CD4-positive, alpha-beta T cell (primary cell): ENCODE measurements at regions of chr6 and their contacts with region 1.

Region 1: DNA sequence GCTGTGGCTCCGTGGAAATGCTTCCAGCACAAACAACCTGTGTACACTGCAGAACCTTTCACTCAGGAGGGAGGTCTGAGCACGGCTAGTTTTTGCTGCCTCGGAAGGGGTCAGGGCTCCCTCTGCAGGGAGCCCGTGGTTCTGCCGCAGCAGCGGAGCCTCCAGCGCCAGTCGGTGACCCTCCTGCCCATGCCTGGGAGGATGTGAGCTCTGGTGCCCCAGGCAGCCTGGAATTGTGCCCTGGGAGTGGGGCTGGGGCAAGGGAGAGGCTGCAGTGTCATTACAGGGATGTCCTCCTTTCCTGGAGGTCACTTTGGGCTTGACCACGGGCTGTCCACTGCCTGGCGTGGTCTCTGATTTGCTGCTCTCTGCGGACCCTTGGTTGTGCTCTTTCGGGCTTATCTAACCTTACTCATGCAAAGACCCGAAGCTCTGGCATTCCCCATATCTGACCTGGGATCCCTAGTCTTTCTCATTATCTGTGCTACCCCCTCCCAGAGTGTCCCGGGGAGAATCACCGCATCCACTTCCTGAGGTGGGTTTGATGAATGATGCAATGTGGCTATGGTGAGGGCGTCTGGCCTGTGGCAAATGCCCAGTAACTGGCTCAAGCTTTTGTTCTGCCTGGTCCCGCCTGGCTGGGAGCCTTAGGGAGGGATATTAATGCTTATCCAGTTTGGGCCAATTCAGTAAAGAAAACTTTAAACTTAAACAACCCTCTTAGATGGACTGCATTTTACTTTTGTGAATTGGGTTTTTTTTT is 59.6 kb upstream of the TAGAP start:
- DNase-seq: peak; percentile 70 to 91 (median 76)
- ATAC-seq: peak; percentile 62
- H3K4me3 ChIP-seq: no peak overlapping the region
- H3K4me3 Mint-ChIP-seq: peak overlapping the region; percentile 31
- H3K27ac ChIP-seq: peak overlapping the region in 1 of 2 donors; percentile 55
- H3K27ac Mint-ChIP-seq: peak overlapping the region; percentile 38
- H3K4me1 ChIP-seq: peaks cover 80% of the 10 kb centered on the region
- H3K4me1 Mint-ChIP-seq: peaks cover 84% of the 10 kb centered on the region
- H3K27me3 ChIP-seq: no peaks in the 10 kb centered on the region
- H3K27me3 Mint-ChIP-seq: no peaks in the 10 kb centered on the region
- CTCF ChIP-seq: peak; percentile 93

Region 2: GRCh38 chr6:157535339-157536222 is 1568.8 kb before region 1 on chr6:
- CTCF ChIA-PET with region 1: no interaction called
- POLR2A ChIA-PET with region 1: no interaction called
- intact Hi-C with region 1: no loop called
- DNase-seq: peak in 3 of 14 experiments; percentile 50 to 68 (median 52)
- ATAC-seq: peak; percentile 59
- H3K4me3 ChIP-seq: no peak overlapping the region
- H3K4me3 Mint-ChIP-seq: peak overlapping the region; percentile 16
- H3K27ac ChIP-seq: peak overlapping the region in 1 of 2 donors; percentile 48
- H3K27ac Mint-ChIP-seq: peak overlapping the region; percentile 79
- H3K4me1 ChIP-seq: peaks cover 52% of the 10 kb centered on the region
- H3K4me1 Mint-ChIP-seq: peaks cover 34% of the 10 kb centered on the region
- H3K27me3 ChIP-seq: no peaks in the 10 kb centered on the region
- H3K27me3 Mint-ChIP-seq: no peaks in the 10 kb centered on the region
- CTCF ChIP-seq: no peak

Region 3: DNA sequence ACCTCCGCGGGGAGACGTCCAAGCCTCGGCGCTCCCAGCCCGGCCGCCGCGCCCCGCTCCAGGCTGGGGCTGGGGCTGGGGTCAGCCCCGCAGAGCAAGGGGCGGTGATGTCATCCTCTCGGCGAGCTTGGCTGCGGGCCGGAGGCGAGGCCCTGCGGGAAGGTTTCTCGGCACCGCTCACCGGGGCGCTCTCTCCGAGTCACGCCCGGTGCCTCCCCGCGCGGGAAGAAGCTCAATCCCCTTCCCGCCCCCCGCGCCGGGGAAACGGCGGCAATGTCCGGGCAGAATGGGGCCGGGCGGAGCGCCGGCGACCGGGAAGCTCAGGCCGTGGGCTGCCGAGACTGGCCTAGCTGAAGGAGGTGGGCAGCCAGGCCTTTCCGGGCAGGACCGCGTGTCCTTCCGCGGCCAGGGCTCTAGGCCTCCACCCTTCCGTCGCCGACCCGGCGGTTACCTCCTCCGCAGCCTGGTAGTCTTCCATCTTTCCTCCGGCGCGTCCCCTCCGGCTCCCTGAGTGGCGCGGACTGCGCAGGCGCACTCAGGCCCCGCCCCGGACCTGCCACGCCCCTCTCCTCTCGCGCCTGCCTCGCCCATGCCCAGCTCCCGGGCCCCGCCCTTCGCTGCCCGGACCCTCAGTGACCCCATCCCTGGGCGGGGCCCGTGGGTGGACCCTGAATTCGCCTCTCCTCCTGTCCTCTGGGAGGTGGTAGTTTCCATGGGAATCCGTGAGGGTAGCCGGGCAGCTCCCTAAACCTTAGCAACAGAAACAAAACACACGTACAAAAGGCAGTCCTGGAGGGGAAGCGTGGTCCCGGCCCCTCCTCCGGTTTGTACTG is 459.9 kb before region 1 on chr6 and contains the start of gene DYNLT1:
- CTCF ChIA-PET with region 1: no interaction called
- POLR2A ChIA-PET with region 1: no interaction called
- intact Hi-C with region 1: loop called in 1 of 2 experiments (anchors 10 kb)
- DNase-seq: peak; percentile 73 to 92 (median 84)
- ATAC-seq: peak; percentile 63
- H3K4me3 ChIP-seq: peak within 1 kb of the TSS; percentile 82
- H3K4me3 Mint-ChIP-seq: peak within 1 kb of the TSS; percentile 100
- H3K27ac ChIP-seq: peak within 1 kb of the TSS; percentile 85 to 93
- H3K27ac Mint-ChIP-seq: peak within 1 kb of the TSS; percentile 97
- H3K4me1 ChIP-seq: peaks cover 53% of the 10 kb centered on the region
- H3K4me1 Mint-ChIP-seq: peaks cover 67% of the 10 kb centered on the region
- H3K27me3 ChIP-seq: no peaks in the 10 kb centered on the region
- H3K27me3 Mint-ChIP-seq: no peaks in the 10 kb centered on the region
- CTCF ChIP-seq: no peak
- total RNA-seq, gene DYNLT1: 170 to 182 TPM

Region 4: GRCh38 chr6:158704181-158704822 is 400.0 kb before region 1 on chr6:
- CTCF ChIA-PET with region 1: no interaction called
- POLR2A ChIA-PET with region 1: no interaction called
- intact Hi-C with region 1: loop called in 1 of 2 experiments (anchors 10 kb)
- DNase-seq: peak; percentile 43 to 89 (median 74)
- ATAC-seq: peak; percentile 96
- H3K4me3 ChIP-seq: peak overlapping the region; percentile 44
- H3K4me3 Mint-ChIP-seq: peak overlapping the region; percentile 69
- H3K27ac ChIP-seq: no peak overlapping the region
- H3K27ac Mint-ChIP-seq: no peak overlapping the region
- H3K4me1 ChIP-seq: peaks cover 17% of the 10 kb centered on the region
- H3K4me1 Mint-ChIP-seq: peaks cover 6% of the 10 kb centered on the region
- H3K27me3 ChIP-seq: no peaks in the 10 kb centered on the region
- H3K27me3 Mint-ChIP-seq: no peaks in the 10 kb centered on the region
- CTCF ChIP-seq: peak; percentile 99

Region 5: DNA sequence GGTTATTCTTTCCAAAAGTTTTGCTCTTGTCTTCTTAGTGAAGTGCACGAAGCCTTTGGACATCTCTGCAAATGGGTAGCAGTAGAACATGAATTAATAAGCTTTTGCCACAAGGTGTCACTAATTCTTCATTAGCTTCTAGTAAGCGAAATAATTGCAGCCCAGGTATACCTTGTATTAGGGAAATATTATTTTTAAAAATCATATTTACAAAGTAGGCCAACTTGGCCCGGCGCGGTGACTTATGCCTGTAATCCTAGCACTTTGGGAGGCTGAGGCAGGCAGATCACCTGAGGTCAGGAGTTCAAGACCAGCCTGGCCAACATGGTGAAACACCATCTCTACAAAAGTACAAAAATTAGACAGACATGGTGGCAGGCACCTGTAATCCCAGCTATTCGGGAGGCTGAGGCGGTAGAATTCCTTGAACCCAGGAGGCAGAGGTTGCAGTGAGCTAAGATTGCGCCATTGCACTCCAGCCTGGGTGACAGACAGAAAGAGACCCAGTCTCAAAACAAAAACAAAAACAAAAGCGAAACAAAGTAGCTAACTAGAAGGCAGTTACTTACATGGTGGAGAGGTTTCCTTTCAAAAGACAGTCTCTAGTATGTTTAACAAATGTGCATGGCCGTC is 95.6 kb before region 1 on chr6:
- CTCF ChIA-PET with region 1: interaction called, 42 read pairs
- POLR2A ChIA-PET with region 1: interaction called, 27 read pairs
- intact Hi-C with region 1: loop called (anchors 1 kb)
- DNase-seq: peak in 4 of 14 experiments; percentile 22 to 79 (median 77)
- ATAC-seq: peak; percentile 83
- H3K4me3 ChIP-seq: peak overlapping the region; percentile 23
- H3K4me3 Mint-ChIP-seq: peak overlapping the region; percentile 39
- H3K27ac ChIP-seq: no peak overlapping the region
- H3K27ac Mint-ChIP-seq: no peak overlapping the region
- H3K4me1 ChIP-seq: peaks cover 29% of the 10 kb centered on the region
- H3K4me1 Mint-ChIP-seq: peaks cover 47% of the 10 kb centered on the region
- H3K27me3 ChIP-seq: no peaks in the 10 kb centered on the region
- H3K27me3 Mint-ChIP-seq: no peaks in the 10 kb centered on the region
- CTCF ChIP-seq: peak; percentile 85

Region 6: DNA sequence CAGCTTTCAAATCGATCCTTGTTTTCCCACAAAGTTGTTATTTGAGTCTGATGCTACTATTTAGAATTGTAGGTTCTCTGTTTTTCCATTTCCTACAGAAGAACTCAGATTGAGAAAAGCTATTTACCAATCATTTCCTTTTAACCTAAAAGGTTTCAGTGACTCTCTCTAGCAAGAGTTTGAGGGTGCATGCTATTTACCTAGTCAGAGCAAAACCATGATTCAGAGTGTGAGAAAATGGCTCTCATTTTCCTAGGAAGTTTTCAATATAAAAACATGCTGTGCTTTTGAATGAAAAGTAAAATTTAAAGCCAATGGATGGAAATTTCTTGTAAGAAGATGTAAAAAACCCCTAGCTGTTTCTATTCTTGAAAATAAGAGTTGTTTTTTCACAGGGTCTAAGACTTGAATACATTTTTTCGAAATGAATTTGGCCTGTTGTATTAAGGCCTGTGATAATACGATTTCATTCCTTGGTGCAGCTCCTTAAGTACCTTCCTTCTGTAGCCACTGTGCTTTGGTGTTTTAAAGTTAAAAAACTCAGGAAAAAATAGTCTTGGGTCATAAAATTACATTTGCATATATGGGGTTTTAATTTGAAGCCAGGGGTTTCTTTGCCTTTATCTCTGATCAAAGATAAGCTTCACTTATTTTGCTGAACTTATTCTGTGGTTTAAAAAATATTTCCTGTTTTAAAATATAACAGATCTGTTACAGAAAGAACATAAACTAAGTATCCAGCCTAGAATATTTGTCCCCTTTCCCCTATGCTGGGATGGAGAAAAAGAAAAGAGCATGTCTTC is 86.4 kb before region 1 on chr6:
- CTCF ChIA-PET with region 1: interaction called, 42 read pairs
- POLR2A ChIA-PET with region 1: interaction called, 18 read pairs
- intact Hi-C with region 1: no loop called
- DNase-seq: peak in 1 of 14 experiments; percentile 34
- ATAC-seq: no peak
- H3K4me3 ChIP-seq: no peak overlapping the region
- H3K4me3 Mint-ChIP-seq: peak overlapping the region; percentile 46
- H3K27ac ChIP-seq: peak overlapping the region; percentile 9 to 57
- H3K27ac Mint-ChIP-seq: peak overlapping the region; percentile 45
- H3K4me1 ChIP-seq: peaks cover 44% of the 10 kb centered on the region
- H3K4me1 Mint-ChIP-seq: peaks cover 57% of the 10 kb centered on the region
- H3K27me3 ChIP-seq: no peaks in the 10 kb centered on the region
- H3K27me3 Mint-ChIP-seq: no peaks in the 10 kb centered on the region
- CTCF ChIP-seq: no peak

Region 7: GRCh38 chr6:159062564-159062945 is 41.8 kb before region 1 on chr6:
- CTCF ChIA-PET with region 1: interaction called, 7 read pairs
- POLR2A ChIA-PET with region 1: interaction called, 30 read pairs
- intact Hi-C with region 1: no loop called
- DNase-seq: peak in 13 of 14 experiments; percentile 27 to 90 (median 56)
- ATAC-seq: peak; percentile 89
- H3K4me3 ChIP-seq: peak overlapping the region; percentile 17
- H3K4me3 Mint-ChIP-seq: peak overlapping the region; percentile 67
- H3K27ac ChIP-seq: peak overlapping the region; percentile 84 to 90
- H3K27ac Mint-ChIP-seq: peak overlapping the region; percentile 96
- H3K4me1 ChIP-seq: peaks cover 63% of the 10 kb centered on the region
- H3K4me1 Mint-ChIP-seq: peaks cover 86% of the 10 kb centered on the region
- H3K27me3 ChIP-seq: no peaks in the 10 kb centered on the region
- H3K27me3 Mint-ChIP-seq: no peaks in the 10 kb centered on the region
- CTCF ChIP-seq: no peak

Region 8: GRCh38 chr6:159134701-159135364 is 30.5 kb after region 1 on chr6:
- CTCF ChIA-PET with region 1: interaction called, 77 read pairs
- POLR2A ChIA-PET with region 1: interaction called, 9 read pairs
- intact Hi-C with region 1: loop called (anchors 2 kb)
- DNase-seq: peak; percentile 56 to 88 (median 72)
- ATAC-seq: peak; percentile 99
- H3K4me3 ChIP-seq: no peak overlapping the region
- H3K4me3 Mint-ChIP-seq: no peak overlapping the region
- H3K27ac ChIP-seq: no peak overlapping the region
- H3K27ac Mint-ChIP-seq: no peak overlapping the region
- H3K4me1 ChIP-seq: peaks cover 5% of the 10 kb centered on the region
- H3K4me1 Mint-ChIP-seq: peaks cover 6% of the 10 kb centered on the region
- H3K27me3 ChIP-seq: no peaks in the 10 kb centered on the region
- H3K27me3 Mint-ChIP-seq: peaks cover 8% of the 10 kb centered on the region
- CTCF ChIP-seq: peak; percentile 98

Region 9: GRCh38 chr6:159279790-159280277 is 175.5 kb after region 1 on chr6:
- CTCF ChIA-PET with region 1: no interaction called
- POLR2A ChIA-PET with region 1: no interaction called
- intact Hi-C with region 1: no loop called
- DNase-seq: no peak
- ATAC-seq: no peak
- H3K4me3 ChIP-seq: no peak overlapping the region
- H3K4me3 Mint-ChIP-seq: no peak overlapping the region
- H3K27ac ChIP-seq: no peak overlapping the region
- H3K27ac Mint-ChIP-seq: no peak overlapping the region
- H3K4me1 ChIP-seq: no peaks in the 10 kb centered on the region
- H3K4me1 Mint-ChIP-seq: no peaks in the 10 kb centered on the region
- H3K27me3 ChIP-seq: peaks cover 0 to 2% of the 10 kb centered on the region in 2 experiments
- H3K27me3 Mint-ChIP-seq: peaks cover 33% of the 10 kb centered on the region
- CTCF ChIP-seq: no peak